ENCODE measurements at regions of chr4 and their contacts with region 1.

Region 1: GRCh38 chr4:83484500-83485461 is at the start of gene ABRAXAS1:
- DNase-seq: peak; percentile 80 to 97
- H3K4me3 ChIP-seq: peak within 1 kb of the TSS; percentile 71 to 89
- H3K27ac ChIP-seq: peak within 1 kb of the TSS; percentile 81 to 96
- H3K4me1 ChIP-seq: peaks cover 0 to 12% of the 10 kb centered on the region in 2 donors
- H3K27me3 ChIP-seq: no peaks in the 10 kb centered on the region
- CTCF ChIP-seq: no peak
- total RNA-seq, gene ABRAXAS1: 13.7 TPM

Region 2: DNA sequence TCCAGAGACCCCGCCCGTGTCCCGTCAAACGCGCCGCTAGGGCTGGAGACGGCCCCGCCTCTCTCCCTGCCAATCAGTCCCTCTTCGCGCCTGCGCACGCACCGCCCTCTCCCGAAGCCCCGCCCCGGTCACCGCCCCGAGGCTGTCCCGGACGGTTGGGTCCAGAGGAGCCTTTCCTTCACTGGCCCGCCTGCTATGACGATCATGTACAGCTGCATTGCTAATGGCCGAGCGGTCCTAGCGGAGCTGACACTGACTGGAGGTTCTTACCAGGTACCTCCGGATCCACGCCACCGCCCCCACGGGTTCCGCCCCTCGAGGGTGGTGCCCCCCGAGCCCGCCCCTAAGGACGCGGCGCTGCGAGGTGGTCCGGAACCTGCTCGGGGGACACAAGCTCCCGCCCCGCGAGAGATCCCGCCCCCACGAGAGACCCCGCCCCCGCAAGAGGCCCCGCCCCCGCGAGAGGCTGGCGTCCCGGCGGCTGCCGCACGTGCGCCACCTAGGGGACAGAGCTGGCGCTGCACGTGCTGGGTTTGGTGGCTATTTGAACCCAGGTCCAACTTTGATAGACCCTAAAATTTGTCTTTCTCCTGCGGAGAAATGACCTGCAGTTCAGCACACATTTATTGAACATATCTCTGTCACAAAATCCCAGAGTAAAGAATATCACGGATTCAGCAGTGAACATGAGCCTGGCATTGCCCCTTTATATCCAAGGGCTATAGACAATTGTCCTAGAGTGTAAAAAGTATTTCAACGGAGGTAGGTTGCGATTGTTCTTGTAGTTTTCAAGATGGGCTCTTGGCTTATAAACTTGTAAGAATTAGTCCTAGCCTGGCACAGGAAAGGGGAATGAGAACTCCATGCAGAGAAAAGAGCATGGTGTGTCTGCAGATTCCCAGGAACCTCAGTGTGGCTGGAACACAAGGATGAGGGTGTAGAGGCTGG is 1199.6 kb before region 1 on chr4:
- intact Hi-C with region 1: loop called (anchors 10 kb)
- DNase-seq: peak; percentile 99 to 100
- H3K4me3 ChIP-seq: peak overlapping the region; percentile 53 to 58
- H3K27ac ChIP-seq: peak overlapping the region; percentile 58 to 66
- H3K4me1 ChIP-seq: peaks cover 0 to 5% of the 10 kb centered on the region in 2 donors
- H3K27me3 ChIP-seq: no peaks in the 10 kb centered on the region
- CTCF ChIP-seq: peak; percentile 70 to 100 (median 100)

Region 3: GRCh38 chr4:82890901-82891706 is 593.7 kb before region 1 on chr4 and contains the start of gene SEC31A:
- intact Hi-C with region 1: loop called (anchors 10 kb)
- DNase-seq: peak; percentile 75 to 97
- H3K4me3 ChIP-seq: peak within 1 kb of the TSS; percentile 87 to 91
- H3K27ac ChIP-seq: peak within 1 kb of the TSS; percentile 98 to 99
- H3K4me1 ChIP-seq: peaks cover 8 to 11% of the 10 kb centered on the region in 2 donors
- H3K27me3 ChIP-seq: no peaks in the 10 kb centered on the region
- CTCF ChIP-seq: peak in 1 of 3 experiments; percentile 20
- total RNA-seq, gene SEC31A: 100 TPM

Region 4: GRCh38 chr4:83034630-83035494 is 449.9 kb before region 1 on chr4 and contains the start of gene COPS4:
- intact Hi-C with region 1: loop called (anchors 10 kb)
- DNase-seq: peak; percentile 95 to 99
- H3K4me3 ChIP-seq: peak within 1 kb of the TSS; percentile 76 to 79
- H3K27ac ChIP-seq: peak within 1 kb of the TSS; percentile 92 to 94
- H3K4me1 ChIP-seq: peaks cover 0 to 16% of the 10 kb centered on the region in 2 donors
- H3K27me3 ChIP-seq: no peaks in the 10 kb centered on the region
- CTCF ChIP-seq: peak; percentile 15 to 59 (median 43)
- total RNA-seq, gene COPS4: 83.5 TPM

Region 5: GRCh38 chr4:83455281-83456129 is 29.3 kb before region 1 on chr4 and contains the starts of genes HELQ and MRPS18C:
- intact Hi-C with region 1: loop called (anchors 1 kb)
- DNase-seq: peak; percentile 94 to 99
- H3K4me3 ChIP-seq: peak within 1 kb of the TSS; percentile 85 to 89
- H3K27ac ChIP-seq: peak within 1 kb of the TSS; percentile 98 to 99
- H3K4me1 ChIP-seq: peaks cover 0 to 14% of the 10 kb centered on the region in 2 donors
- H3K27me3 ChIP-seq: no peaks in the 10 kb centered on the region
- CTCF ChIP-seq: peak in 2 of 3 experiments; percentile 26 to 42
- total RNA-seq, gene HELQ: 1.1 TPM
- total RNA-seq, gene MRPS18C: 13.0 TPM

Region 6: GRCh38 chr4:83535520-83536361 is 51.0 kb after region 1 on chr4 and contains the start of gene GPAT3:
- intact Hi-C with region 1: loop called (anchors 1 kb)
- DNase-seq: peak; percentile 19 to 90
- H3K4me3 ChIP-seq: peak within 1 kb of the TSS; percentile 82 to 86
- H3K27ac ChIP-seq: peak within 1 kb of the TSS; percentile 35 to 66
- H3K4me1 ChIP-seq: no peaks in the 10 kb centered on the region
- H3K27me3 ChIP-seq: no peaks in the 10 kb centered on the region
- CTCF ChIP-seq: no peak
- total RNA-seq, gene GPAT3: 1.5 TPM

Region 7: GRCh38 chr4:83639849-83640493 is 155.2 kb after region 1 on chr4:
- intact Hi-C with region 1: loop called (anchors 2 kb)
- DNase-seq: peak in 1 of 2 donors; percentile 80
- H3K4me3 ChIP-seq: no peak overlapping the region
- H3K27ac ChIP-seq: no peak overlapping the region
- H3K4me1 ChIP-seq: peaks cover 0 to 3% of the 10 kb centered on the region in 2 donors
- H3K27me3 ChIP-seq: no peaks in the 10 kb centered on the region
- CTCF ChIP-seq: peak; percentile 44 to 76 (median 75)